Activated CD4-positive, alpha-beta memory T cell treated with anti-CD3 and anti-CD28 coated beads for 36 hours (primary cell): ENCODE measurements at regions of chr20 and their contacts with region 1.

Region 1: GRCh38 chr20:43914311-43915210 is at the start of gene TOX2:
- DNase-seq: peak; percentile 48
- H3K4me3 Mint-ChIP-seq: peak within 1 kb of the TSS; percentile 78
- H3K27ac Mint-ChIP-seq: peak within 1 kb of the TSS; percentile 43
- H3K4me1 Mint-ChIP-seq: peaks cover 39% of the 10 kb centered on the region
- H3K27me3 Mint-ChIP-seq: peaks cover 44% of the 10 kb centered on the region
- total RNA-seq, gene TOX2: 2.2 to 2.5 TPM

Region 2: GRCh38 chr20:43361526-43361925 is 553.0 kb before region 1 on chr20:
- CTCF ChIA-PET with region 1: no interaction called
- POLR2A ChIA-PET with region 1: no interaction called
- intact Hi-C with region 1: no loop called
- DNase-seq: no peak
- H3K4me3 Mint-ChIP-seq: no peak overlapping the region
- H3K27ac Mint-ChIP-seq: no peak overlapping the region
- H3K4me1 Mint-ChIP-seq: no peaks in the 10 kb centered on the region
- H3K27me3 Mint-ChIP-seq: peaks cover 18% of the 10 kb centered on the region

Region 3: GRCh38 chr20:43840382-43841070 is 74.0 kb before region 1 on chr20:
- CTCF ChIA-PET with region 1: no interaction called
- POLR2A ChIA-PET with region 1: no interaction called
- intact Hi-C with region 1: loop called (anchors 5 kb)
- DNase-seq: peak; percentile 64
- H3K4me3 Mint-ChIP-seq: no peak overlapping the region
- H3K27ac Mint-ChIP-seq: no peak overlapping the region
- H3K4me1 Mint-ChIP-seq: peaks cover 31% of the 10 kb centered on the region
- H3K27me3 Mint-ChIP-seq: peaks cover 20% of the 10 kb centered on the region

Region 4: DNA sequence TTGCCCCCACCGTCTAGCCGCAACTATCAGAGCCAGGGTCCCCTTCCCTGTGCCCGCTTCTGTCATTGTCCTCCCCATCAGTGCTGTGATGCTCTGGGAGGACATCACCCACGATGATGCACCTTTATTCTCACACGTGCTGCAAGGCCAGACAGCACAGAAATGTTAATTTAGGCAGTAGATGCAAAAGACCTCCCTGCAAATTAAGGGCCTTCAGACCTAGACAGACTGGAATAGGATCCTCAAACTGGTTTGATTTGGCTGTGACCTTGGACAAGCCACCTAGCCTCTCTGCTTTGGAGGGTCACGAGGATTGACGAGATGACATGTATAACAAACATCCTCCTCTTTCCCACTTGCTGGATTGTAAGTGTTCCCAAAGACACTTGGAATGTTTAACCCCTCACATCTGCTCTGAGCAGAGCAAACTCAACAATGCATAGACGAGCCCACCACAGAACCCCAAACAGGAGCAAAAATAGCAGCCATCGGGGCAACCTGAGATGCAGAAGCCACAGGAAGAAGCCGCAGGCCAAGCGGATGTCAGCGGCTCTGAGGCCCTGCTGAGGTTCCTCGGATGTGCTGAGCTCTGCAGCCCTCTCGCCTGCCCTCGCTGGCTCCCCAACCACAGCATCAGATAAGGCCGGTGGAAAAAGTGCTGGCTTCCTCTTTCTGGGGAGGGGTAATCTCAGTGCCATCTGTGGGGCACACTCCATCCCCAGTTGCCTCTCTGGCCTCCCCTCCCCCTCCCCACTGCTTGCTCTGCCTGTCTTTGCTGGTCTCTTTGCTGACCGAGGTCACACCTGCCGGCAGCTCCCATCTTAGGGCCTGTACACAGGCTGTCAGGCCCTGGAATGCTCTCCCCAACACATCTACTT is 35.4 kb after region 1 on chr20:
- CTCF ChIA-PET with region 1: no interaction called
- POLR2A ChIA-PET with region 1: no interaction called
- intact Hi-C with region 1: loop called (anchors 2 kb)
- DNase-seq: peak; percentile 88
- H3K4me3 Mint-ChIP-seq: peak overlapping the region; percentile 11
- H3K27ac Mint-ChIP-seq: peak overlapping the region; percentile 50
- H3K4me1 Mint-ChIP-seq: peaks cover 60% of the 10 kb centered on the region
- H3K27me3 Mint-ChIP-seq: peaks cover 31% of the 10 kb centered on the region

Region 5: DNA sequence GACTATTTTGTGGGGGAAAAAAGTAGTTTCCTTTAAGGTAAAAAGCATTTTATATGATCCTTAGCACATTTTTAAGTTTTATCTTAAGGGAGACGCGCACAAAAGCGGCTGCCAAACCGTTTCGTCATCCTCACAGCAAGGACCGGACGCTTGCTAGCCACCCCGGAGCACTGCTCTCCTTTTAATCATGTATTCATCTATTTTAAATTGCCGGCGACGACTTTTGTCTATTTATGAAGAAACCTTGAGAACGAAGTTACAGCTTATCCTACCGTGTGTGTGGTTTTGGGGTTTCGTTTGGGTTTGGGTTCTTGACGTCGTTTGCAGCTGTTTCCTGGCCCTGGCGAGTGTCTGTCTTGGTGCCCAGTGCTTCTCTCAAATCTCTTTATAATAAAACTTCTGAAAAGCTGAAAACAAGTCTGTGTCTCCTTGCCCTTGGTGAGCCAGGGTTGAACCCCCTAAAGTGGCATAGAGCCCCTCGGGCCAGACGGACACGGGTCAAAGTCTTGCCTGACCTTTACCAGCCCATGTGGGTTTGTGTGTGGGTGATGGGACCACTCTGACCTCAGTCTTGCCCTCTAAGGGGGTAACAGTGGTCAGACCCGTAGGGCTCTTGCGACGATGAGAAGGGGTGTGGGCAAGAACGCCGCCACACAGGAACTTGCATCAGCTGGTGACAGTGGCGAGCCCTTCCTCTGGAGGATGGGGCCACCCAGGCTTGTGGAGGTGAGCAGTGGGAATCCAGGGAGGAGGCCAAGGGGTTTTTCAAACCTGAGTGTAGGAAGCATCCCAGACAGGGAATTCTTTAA is 154.8 kb after region 1 on chr20:
- CTCF ChIA-PET with region 1: no interaction called
- POLR2A ChIA-PET with region 1: no interaction called
- intact Hi-C with region 1: loop called (anchors 10 kb)
- DNase-seq: peak; percentile 74
- H3K4me3 Mint-ChIP-seq: peak overlapping the region; percentile 65
- H3K27ac Mint-ChIP-seq: peak overlapping the region; percentile 84
- H3K4me1 Mint-ChIP-seq: peaks cover 50% of the 10 kb centered on the region
- H3K27me3 Mint-ChIP-seq: no peaks in the 10 kb centered on the region